Activated CD4-positive, alpha-beta T cell treated with anti-CD3 and anti-CD28 coated beads for 36 hours (primary cell): ENCODE measurements at regions of chr4 and their contacts with region 1.

Region 1: DNA sequence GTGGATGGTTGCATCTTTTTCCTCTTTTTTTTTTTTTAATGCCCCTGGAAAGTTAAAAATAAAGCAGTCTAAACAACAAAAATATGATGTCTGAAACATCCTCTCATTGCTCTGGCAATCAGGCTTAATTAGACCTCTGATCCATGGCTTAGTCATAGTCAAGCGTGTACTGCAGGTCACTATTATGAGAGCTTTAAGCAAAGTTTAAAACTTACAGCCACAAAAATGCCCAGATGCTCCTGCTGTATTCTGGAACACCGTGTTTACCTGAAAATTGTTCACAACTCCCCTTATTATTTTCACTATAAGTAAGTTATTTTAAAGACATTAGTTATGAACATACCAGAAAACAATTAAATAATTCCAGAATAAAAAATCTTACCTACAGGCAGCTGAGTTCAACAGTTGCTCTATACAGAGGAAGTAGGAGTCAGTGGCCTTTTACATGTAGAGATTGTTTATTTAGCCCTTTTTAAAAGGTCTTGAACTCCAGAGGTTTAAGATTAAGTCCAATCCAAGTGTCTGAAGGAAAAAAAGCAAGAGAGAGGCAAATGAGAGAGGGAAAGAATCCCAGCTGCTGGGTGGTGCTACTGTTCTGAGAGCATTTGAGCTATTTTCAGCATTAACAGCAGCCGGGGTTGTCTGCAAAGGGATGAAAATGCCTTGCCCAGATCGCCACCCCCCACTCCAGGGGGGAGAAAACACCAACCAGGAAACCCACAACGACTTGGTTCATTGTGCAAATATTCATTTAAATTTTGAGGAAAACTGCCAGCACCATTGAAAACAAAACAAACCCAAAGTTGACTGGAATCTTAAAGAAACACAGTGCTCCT is 36.9 kb downstream of the SORBS2 start:
- DNase-seq: no peak
- ATAC-seq: no peak
- H3K4me3 Mint-ChIP-seq: no peak overlapping the region
- H3K27ac Mint-ChIP-seq: no peak overlapping the region
- H3K4me1 Mint-ChIP-seq: no peaks in the 10 kb centered on the region
- H3K27me3 Mint-ChIP-seq: peaks cover 2% of the 10 kb centered on the region

Region 2: DNA sequence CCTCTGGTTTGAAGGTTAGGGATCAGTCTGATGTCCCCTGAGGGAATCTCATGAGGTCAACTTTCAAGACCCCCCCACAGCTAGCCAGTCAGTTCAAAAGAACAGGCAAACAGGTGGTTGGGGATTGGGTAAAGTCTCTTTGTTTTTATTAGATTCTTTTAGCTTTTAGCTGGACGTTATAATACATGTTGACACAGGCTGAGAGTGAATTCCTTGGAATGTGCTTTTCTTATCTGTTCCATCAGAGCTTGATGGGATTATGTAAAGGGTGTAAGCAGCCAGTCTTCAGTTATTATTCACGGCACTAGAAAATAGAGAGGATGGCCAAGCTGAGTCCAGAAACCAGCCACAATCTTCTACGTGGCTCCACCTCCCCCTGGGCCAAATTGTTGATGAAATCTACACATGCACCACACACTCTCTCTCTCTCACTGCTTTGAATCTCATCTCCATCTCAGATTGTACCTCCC is 1578.2 kb before region 1 on chr4:
- CTCF ChIA-PET with region 1: no interaction called
- POLR2A ChIA-PET with region 1: no interaction called
- intact Hi-C with region 1: loop called in 1 of 2 experiments (anchors 10 kb)
- DNase-seq: no peak
- ATAC-seq: no peak
- H3K4me3 Mint-ChIP-seq: no peak overlapping the region
- H3K27ac Mint-ChIP-seq: no peak overlapping the region
- H3K4me1 Mint-ChIP-seq: no peaks in the 10 kb centered on the region
- H3K27me3 Mint-ChIP-seq: peaks cover 2% of the 10 kb centered on the region

Region 3: DNA sequence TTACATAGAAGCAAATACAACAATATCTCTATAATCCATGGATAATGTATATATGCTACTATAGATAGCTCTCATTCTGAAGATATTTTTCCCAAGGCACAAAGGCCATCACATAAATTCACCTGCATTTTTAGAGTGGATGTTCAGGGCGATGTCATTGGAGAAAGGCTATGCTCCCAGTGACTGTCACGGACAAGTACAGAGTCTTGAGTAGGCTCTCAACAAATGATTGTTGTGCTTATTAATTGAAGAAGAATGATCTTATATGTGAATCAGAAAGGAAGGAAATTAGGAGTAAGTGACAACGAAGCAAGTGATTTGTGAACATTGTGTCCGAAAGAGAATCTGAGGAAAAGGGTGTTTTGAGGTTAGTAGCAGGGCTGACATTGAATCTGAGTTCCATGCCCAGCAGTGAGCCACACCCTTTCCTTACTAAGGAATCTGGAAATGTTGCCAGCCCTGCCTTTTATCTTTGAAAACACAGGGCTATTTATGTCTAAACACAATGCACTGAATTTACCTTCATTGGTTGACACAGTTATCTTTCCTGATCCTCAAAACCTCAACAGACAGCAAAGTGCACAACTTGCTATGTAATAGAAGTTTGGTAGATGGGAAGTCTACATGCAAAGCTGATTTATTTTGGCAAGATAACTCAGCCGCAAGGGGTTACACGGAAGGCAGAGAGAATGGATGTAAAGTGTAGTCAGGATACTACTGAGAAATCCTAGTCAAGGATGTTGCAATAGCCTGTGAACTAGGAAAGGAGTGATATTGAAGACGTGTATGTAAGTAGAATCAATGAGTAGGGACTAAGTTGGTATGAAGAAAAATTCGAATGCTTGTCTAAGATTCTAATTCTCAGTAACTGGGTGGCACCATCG is 13.5 kb before region 1 on chr4:
- CTCF ChIA-PET with region 1: interaction called, 4 read pairs
- POLR2A ChIA-PET with region 1: interaction called, 12 read pairs
- intact Hi-C with region 1: no loop called
- DNase-seq: no peak
- ATAC-seq: no peak
- H3K4me3 Mint-ChIP-seq: no peak overlapping the region
- H3K27ac Mint-ChIP-seq: no peak overlapping the region
- H3K4me1 Mint-ChIP-seq: no peaks in the 10 kb centered on the region
- H3K27me3 Mint-ChIP-seq: peaks cover 15% of the 10 kb centered on the region

Region 4: GRCh38 chr4:185950891-185951290 is 175.8 kb after region 1 on chr4:
- CTCF ChIA-PET with region 1: no interaction called
- POLR2A ChIA-PET with region 1: no interaction called
- intact Hi-C with region 1: no loop called
- DNase-seq: no peak
- ATAC-seq: no peak
- H3K4me3 Mint-ChIP-seq: no peak overlapping the region
- H3K27ac Mint-ChIP-seq: no peak overlapping the region
- H3K4me1 Mint-ChIP-seq: no peaks in the 10 kb centered on the region
- H3K27me3 Mint-ChIP-seq: peaks cover 6% of the 10 kb centered on the region